ENCODE measurements at regions of chr20 and their contacts with region 1.

Region 1: DNA sequence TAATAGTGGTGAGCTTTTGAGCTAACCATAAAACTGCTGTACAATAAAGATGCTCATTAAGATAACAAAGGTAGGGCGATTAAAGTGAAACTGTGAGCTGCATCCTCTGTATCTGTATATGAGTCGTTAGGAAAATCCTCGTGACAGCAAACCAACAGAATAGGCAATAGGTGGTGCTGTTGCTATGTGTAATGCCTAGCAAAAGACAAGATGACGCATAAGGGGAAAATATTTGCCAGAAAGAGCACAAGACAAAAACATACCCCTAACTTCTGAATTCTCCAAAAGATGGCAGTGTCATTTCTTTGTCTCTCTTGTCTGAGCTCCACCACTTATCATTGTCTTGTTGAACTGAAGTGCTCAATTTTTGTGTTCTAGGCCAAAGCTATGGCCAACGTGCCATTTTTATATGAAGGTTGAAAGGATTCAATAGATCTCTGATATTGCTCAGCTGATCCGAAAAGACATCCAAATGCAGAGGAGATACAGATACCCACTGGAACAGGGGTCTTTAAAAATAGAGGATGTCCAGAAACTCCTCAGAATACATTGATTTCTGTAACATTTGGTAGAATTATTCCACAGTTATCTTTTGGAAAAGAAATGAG is 56.3 kb upstream of the ANKEF1 start:
- DNase-seq: peak; percentile 69
- H3K4me3 ChIP-seq: no peak overlapping the region
- H3K27ac ChIP-seq: no peak overlapping the region
- H3K4me1 ChIP-seq: no peaks in the 10 kb centered on the region
- H3K27me3 ChIP-seq: no peaks in the 10 kb centered on the region
- CTCF ChIP-seq: peak; percentile 60 to 88 (median 65)
- POLR2A ChIP-seq: no peak

Region 2: DNA sequence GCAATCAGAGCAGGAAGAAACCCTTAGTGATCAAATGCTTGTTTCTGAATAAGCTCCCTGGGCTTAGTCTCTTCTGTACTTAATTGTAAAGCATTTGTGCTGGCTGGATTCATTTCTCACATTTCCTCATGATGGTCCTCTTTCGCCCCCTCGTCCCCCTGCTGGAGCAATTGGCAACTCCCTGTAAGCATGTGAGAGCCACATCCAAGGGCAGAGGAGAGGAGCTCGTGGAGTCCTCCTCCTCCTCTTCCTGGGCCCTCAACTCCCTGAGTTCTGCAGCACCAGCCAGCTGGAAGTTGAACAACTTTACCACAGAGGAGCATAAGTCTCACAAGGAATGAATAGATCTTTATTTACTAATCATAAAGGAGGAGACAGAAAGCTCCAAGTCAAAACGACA is 68.9 kb after region 1 on chr20:
- intact Hi-C with region 1: no loop called
- DNase-seq: peak; percentile 45
- H3K4me3 ChIP-seq: no peak overlapping the region
- H3K27ac ChIP-seq: no peak overlapping the region
- H3K4me1 ChIP-seq: peaks cover 9% of the 10 kb centered on the region
- H3K27me3 ChIP-seq: no peaks in the 10 kb centered on the region
- CTCF ChIP-seq: no peak
- POLR2A ChIP-seq: no peak

Region 3: GRCh38 chr20:10089871-10090587 is 111.5 kb after region 1 on chr20:
- intact Hi-C with region 1: loop called (anchors 5 kb)
- DNase-seq: no peak
- H3K4me3 ChIP-seq: no peak overlapping the region
- H3K27ac ChIP-seq: no peak overlapping the region
- H3K4me1 ChIP-seq: no peaks in the 10 kb centered on the region
- H3K27me3 ChIP-seq: no peaks in the 10 kb centered on the region
- CTCF ChIP-seq: no peak
- POLR2A ChIP-seq: no peak